Vagina (tissue), 2 donors: ENCODE measurements at regions of chr5 and their contacts with region 1.

Region 1: GRCh38 chr5:73205305-73205704 is 32.3 kb downstream of the TMEM174 start:
- DNase-seq: no peak
- H3K4me3 ChIP-seq: no peak overlapping the region
- H3K27ac ChIP-seq: no peak overlapping the region
- H3K4me1 ChIP-seq: peaks cover 6% of the 10 kb centered on the region
- H3K27me3 ChIP-seq: no peaks in the 10 kb centered on the region
- CTCF ChIP-seq: no peak
- POLR2A ChIP-seq: no peak

Region 2: GRCh38 chr5:73160239-73160671 is 45.0 kb before region 1 on chr5:
- intact Hi-C with region 1: no loop called
- DNase-seq: no peak
- H3K4me3 ChIP-seq: no peak overlapping the region
- H3K27ac ChIP-seq: no peak overlapping the region
- H3K4me1 ChIP-seq: no peaks in the 10 kb centered on the region
- H3K27me3 ChIP-seq: no peaks in the 10 kb centered on the region
- CTCF ChIP-seq: no peak
- POLR2A ChIP-seq: no peak

Region 3: GRCh38 chr5:73454351-73455036 is 249.2 kb after region 1 on chr5:
- intact Hi-C with region 1: loop called (anchors 5 kb)
- DNase-seq: no peak
- H3K4me3 ChIP-seq: no peak overlapping the region
- H3K27ac ChIP-seq: no peak overlapping the region
- H3K4me1 ChIP-seq: peaks cover 11% of the 10 kb centered on the region
- H3K27me3 ChIP-seq: peaks cover 5% of the 10 kb centered on the region
- CTCF ChIP-seq: peak in 2 of 3 experiments; percentile 18 to 50
- POLR2A ChIP-seq: no peak